GM12878 (cell line): ENCODE measurements at regions of chr18 and their contacts with region 1.

Region 1: DNA sequence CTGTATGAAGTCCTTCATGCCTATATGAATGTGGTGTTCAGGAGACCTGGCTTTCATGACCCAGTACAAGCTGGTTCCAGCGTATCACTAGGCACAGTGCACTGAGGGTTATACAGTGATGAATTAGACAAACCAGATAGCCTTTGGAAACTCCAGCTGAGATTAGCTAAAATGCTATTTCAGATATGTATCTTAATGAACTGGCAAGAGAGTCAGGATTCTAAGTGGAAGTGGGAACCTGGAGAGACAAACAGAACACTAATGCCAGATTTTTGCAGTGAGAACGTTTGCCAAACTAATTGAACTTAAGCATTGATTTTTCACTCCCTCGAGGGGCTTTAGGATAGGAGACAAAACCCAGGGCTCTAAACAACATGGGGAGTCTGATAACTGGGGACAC is 66.1 kb upstream of the EMILIN2 start:
- DNase-seq: no peak
- ATAC-seq: no peak
- H3K4me3 ChIP-seq: no peak overlapping the region
- H3K27ac ChIP-seq: no peak overlapping the region
- H3K4me1 ChIP-seq: no peaks in the 10 kb centered on the region
- H3K27me3 ChIP-seq: no peaks in the 10 kb centered on the region
- CTCF ChIP-seq: no peak
- EP300 ChIP-seq: no peak
- POLR2A ChIP-seq: no peak
- RAD21 ChIP-seq: no peak

Region 2: DNA sequence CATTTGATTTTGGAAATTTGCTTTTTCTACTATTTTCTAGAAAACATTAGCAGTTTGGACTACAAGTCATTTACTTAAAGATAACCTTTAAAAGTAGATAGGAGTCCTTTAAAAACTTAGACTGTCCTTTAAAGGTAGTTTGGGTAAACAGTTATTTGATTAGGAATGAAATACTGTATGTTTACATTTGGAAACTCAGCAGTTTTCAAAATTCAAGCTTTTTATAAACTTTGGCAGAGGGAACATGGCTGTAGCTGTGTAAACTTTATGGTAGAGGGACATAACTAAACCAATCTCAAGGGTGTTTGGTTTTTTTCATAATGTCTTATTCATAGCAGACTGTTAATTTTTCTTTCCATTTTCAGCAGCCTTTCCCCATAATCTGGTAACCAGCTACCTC is 34.5 kb before region 1 on chr18:
- CTCF ChIA-PET with region 1: no interaction called
- POLR2A ChIA-PET with region 1: no interaction called
- RAD21 ChIA-PET with region 1: no interaction called
- SMC1A ChIA-PET with region 1: no interaction called
- in situ Hi-C with region 1: no loop called
- intact Hi-C with region 1: loop called (anchors 2 kb)
- DNase-seq: no peak
- ATAC-seq: no peak
- H3K4me3 ChIP-seq: no peak overlapping the region
- H3K27ac ChIP-seq: no peak overlapping the region
- H3K4me1 ChIP-seq: no peaks in the 10 kb centered on the region
- H3K27me3 ChIP-seq: no peaks in the 10 kb centered on the region
- CTCF ChIP-seq: no peak
- EP300 ChIP-seq: no peak
- POLR2A ChIP-seq: no peak
- RAD21 ChIP-seq: no peak

Region 3: DNA sequence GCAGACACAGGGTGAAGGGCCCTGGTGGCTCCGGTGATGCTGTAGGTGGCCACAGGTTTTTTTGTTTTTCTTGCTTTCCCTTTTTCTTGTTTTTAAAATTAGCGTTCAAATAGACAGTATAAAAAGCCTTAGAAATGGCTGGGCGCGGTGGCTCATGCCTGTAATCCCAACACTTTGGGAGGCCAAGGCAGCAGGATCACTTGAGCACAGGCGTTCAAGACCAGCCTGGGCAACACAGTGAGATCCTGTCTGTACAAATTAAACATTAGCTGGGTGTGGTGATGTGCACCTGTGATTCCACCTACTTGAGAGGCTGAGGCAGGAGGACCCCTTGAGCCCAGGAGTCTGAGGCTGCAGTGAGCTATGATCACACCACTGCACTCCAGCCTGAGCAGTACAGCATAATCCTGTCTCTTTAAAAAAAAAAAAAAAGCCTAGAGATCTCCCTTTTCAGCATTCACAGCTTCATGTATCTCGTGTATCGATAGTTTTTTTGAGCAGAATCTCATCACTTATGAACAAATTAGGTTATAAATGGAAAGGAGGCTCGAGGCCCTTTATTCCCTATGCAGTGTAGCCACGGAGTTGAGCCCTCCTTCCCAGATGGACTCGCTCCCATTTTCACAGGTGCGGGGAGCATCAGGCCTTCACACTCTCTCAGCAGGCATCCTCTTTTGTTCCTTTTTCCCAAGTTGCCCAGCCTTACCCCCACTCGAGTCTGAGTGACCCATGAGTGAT is 116.9 kb after region 1 on chr18:
- CTCF ChIA-PET with region 1: no interaction called
- POLR2A ChIA-PET with region 1: no interaction called
- RAD21 ChIA-PET with region 1: no interaction called
- SMC1A ChIA-PET with region 1: no interaction called
- in situ Hi-C with region 1: no loop called
- intact Hi-C with region 1: no loop called
- DNase-seq: no peak
- ATAC-seq: no peak
- H3K4me3 ChIP-seq: no peak overlapping the region
- H3K27ac ChIP-seq: no peak overlapping the region
- H3K4me1 ChIP-seq: 0 out of 2 replicates have a peak, but pooled peaks cover 3% of the 10 kb centered on the region
- H3K27me3 ChIP-seq: no peaks in the 10 kb centered on the region; a peak in 1 of 4 replicates
- CTCF ChIP-seq: no peak
- EP300 ChIP-seq: no peak
- POLR2A ChIP-seq: no peak
- RAD21 ChIP-seq: no peak